MCF 10A (cell line): ENCODE measurements at regions of chr7 and their contacts with region 1.

Region 1: DNA sequence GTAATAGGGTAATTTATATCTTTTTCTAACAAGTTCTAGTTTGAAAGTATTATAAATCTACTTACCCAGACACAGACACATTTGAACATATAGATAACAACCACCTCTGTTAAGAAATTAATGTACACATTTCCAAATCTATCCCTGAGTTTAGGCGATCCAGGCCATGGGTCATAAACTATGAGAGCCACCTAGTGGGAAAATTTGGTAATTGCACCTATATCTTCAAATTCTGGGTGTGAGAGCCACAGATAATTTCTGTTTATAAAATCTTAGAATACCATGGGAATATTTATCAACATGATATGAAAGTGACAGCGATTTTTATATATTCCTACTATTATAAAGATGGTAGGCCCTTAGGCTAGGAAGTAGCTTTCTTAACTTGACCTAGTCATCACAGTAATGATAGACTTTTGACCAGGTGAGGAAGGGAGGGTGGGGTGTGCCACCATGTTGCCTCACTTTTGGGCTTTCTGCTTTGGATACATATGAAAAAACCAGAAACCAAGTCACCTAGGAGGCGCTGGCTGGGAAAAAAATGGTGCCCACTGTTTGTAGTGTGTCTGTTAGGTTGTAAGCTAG is 8.0 kb upstream of the EPHA1 start:
- DNase-seq: peak; percentile 75
- H3K4me3 Mint-ChIP-seq: no peak overlapping the region
- H3K27ac Mint-ChIP-seq: no peak overlapping the region
- H3K4me1 Mint-ChIP-seq: peaks cover 32% of the 10 kb centered on the region
- H3K27me3 Mint-ChIP-seq: no peaks in the 10 kb centered on the region
- CTCF ChIP-seq: peak; percentile 73

Region 2: GRCh38 chr7:143263266-143264195 is 153.1 kb before region 1 on chr7 and contains the start of gene GSTK1:
- CTCF ChIA-PET with region 1: interaction called, 37 read pairs
- POLR2A ChIA-PET with region 1: interaction called, 8 read pairs
- intact Hi-C with region 1: no loop called
- DNase-seq: peak; percentile 77
- H3K4me3 Mint-ChIP-seq: peak within 1 kb of the TSS; percentile 98
- H3K27ac Mint-ChIP-seq: peak within 1 kb of the TSS; percentile 92
- H3K4me1 Mint-ChIP-seq: peaks cover 29% of the 10 kb centered on the region
- H3K27me3 Mint-ChIP-seq: no peaks in the 10 kb centered on the region
- CTCF ChIP-seq: no peak
- total RNA-seq, gene GSTK1: 69.7 and 79.9 TPM in 2 replicates

Region 3: GRCh38 chr7:143299840-143300239 is 116.8 kb before region 1 on chr7:
- CTCF ChIA-PET with region 1: interaction called, 12 read pairs
- POLR2A ChIA-PET with region 1: no interaction called
- intact Hi-C with region 1: no loop called
- DNase-seq: peak; percentile 45
- H3K4me3 Mint-ChIP-seq: no peak overlapping the region
- H3K27ac Mint-ChIP-seq: no peak overlapping the region
- H3K4me1 Mint-ChIP-seq: peaks cover 13% of the 10 kb centered on the region
- H3K27me3 Mint-ChIP-seq: no peaks in the 10 kb centered on the region
- CTCF ChIP-seq: peak; percentile 43

Region 4: GRCh38 chr7:143321734-143322133 is 94.9 kb before region 1 on chr7:
- CTCF ChIA-PET with region 1: no interaction called
- POLR2A ChIA-PET with region 1: no interaction called
- intact Hi-C with region 1: loop called (anchors 2 kb)
- DNase-seq: peak; percentile 52
- H3K4me3 Mint-ChIP-seq: no peak overlapping the region
- H3K27ac Mint-ChIP-seq: no peak overlapping the region
- H3K4me1 Mint-ChIP-seq: peaks cover 26% of the 10 kb centered on the region
- H3K27me3 Mint-ChIP-seq: no peaks in the 10 kb centered on the region
- CTCF ChIP-seq: peak; percentile 34

Region 5: DNA sequence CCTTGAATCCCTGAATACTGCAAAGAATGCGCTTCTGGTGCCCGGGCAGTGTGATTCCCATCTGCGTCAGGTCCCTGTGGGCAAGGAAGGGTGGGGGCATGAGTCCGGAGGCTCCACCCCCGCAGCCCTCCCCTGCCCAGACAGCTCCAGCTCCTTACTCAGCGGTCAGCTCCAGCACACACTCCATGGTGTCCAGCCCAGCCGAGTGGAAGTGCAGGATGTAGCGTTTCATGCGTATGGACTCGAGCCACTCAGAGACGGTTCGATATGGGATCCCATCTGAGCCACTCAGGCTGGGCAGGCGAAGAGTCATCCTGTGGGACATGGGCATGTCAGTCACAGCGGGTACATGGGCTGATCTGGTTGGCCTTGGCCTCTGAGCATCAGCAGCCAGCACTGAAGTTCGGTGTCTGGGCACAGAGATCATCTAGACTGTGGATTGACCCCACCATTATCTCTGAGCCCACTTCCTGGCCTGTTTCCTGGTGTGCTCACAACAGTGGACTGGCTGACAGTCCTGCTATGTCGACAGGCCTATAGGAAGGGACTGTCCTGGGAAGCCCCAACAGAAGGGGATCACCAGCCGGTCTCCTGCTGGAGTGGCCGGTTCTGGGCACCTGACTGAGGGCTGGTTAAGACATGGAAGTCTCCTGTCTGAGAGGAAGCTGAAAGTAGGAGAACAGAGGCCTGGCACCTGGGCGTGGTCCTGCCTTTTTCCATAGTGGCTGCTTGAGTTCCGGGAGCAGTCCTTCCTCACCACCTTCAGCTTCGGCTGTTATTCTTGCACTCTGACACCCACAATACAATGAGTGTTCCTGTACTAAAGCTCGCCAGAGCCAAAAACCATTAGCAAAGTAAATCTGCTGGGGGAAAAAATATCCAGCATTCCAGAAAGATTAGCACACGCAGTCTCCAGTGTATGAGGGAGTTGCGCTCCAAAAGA is 24.9 kb before region 1 on chr7:
- CTCF ChIA-PET with region 1: interaction called, 10 read pairs
- POLR2A ChIA-PET with region 1: interaction called, 5 read pairs
- intact Hi-C with region 1: no loop called
- DNase-seq: no peak
- H3K4me3 Mint-ChIP-seq: no peak overlapping the region
- H3K27ac Mint-ChIP-seq: peak overlapping the region; percentile 63
- H3K4me1 Mint-ChIP-seq: peaks cover 17% of the 10 kb centered on the region
- H3K27me3 Mint-ChIP-seq: no peaks in the 10 kb centered on the region
- CTCF ChIP-seq: no peak

Region 6: DNA sequence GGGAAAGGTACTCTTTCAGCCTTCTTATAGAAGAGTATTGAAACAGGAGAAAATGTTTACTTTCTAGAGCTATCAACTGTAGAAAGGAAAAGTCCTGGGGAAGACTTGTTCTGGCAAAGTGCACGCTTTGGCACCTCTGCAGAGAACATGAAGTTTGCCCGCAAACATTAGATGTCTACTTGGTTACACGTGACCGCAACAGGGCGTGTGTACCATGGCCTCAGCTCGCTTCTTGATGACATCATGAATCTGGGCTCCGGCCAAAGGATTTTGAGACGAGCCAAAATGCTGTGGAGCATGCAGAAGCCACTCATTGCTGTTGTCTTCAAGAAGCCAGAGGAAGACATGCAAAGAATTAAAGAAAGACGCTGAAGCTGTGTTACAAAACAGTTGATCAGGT is 18.0 kb after region 1 on chr7:
- CTCF ChIA-PET with region 1: interaction called, 23 read pairs
- POLR2A ChIA-PET with region 1: no interaction called
- intact Hi-C with region 1: no loop called
- DNase-seq: peak; percentile 94
- H3K4me3 Mint-ChIP-seq: no peak overlapping the region
- H3K27ac Mint-ChIP-seq: no peak overlapping the region
- H3K4me1 Mint-ChIP-seq: peaks cover 33% of the 10 kb centered on the region
- H3K27me3 Mint-ChIP-seq: peaks cover 5% of the 10 kb centered on the region
- CTCF ChIP-seq: no peak